ENCODE measurements at regions of chr1 and their contacts with region 1.

Region 1: GRCh38 chr1:17119076-17119772 is at the start of gene PADI2:
- DNase-seq: peak in 1 of 2 experiments; percentile 89
- H3K4me3 ChIP-seq: peak within 1 kb of the TSS; percentile 53 to 78 (median 67)
- H3K27ac ChIP-seq: no peak within 1 kb of the TSS
- H3K4me1 ChIP-seq: peaks cover 0 to 17% (median 5%) of the 10 kb centered on the region in 4 experiments; a peak in 5 of 7 replicates
- H3K27me3 ChIP-seq: peaks cover 16 to 29% (median 24%) of the 10 kb centered on the region in 4 experiments
- CTCF ChIP-seq: no peak
- EP300 ChIP-seq: no peak
- POLR2A ChIP-seq: no peak
- RAD21 ChIP-seq: no peak
- total RNA-seq, gene PADI2: 5.8 and 7.5 TPM in 2 replicates

Region 2: GRCh38 chr1:17222557-17222956 is 103.3 kb after region 1 on chr1:
- CTCF ChIA-PET with region 1: interaction called, 16 read pairs
- POLR2A ChIA-PET with region 1: no interaction called
- DNase-seq: no peak
- H3K4me3 ChIP-seq: no peak overlapping the region
- H3K27ac ChIP-seq: no peak overlapping the region
- H3K4me1 ChIP-seq: no peaks in the 10 kb centered on the region; a peak in 1 of 7 replicates
- H3K27me3 ChIP-seq: no peaks in the 10 kb centered on the region; a peak in 1 of 7 replicates
- CTCF ChIP-seq: no peak
- EP300 ChIP-seq: no peak
- POLR2A ChIP-seq: no peak
- RAD21 ChIP-seq: no peak

Region 3: DNA sequence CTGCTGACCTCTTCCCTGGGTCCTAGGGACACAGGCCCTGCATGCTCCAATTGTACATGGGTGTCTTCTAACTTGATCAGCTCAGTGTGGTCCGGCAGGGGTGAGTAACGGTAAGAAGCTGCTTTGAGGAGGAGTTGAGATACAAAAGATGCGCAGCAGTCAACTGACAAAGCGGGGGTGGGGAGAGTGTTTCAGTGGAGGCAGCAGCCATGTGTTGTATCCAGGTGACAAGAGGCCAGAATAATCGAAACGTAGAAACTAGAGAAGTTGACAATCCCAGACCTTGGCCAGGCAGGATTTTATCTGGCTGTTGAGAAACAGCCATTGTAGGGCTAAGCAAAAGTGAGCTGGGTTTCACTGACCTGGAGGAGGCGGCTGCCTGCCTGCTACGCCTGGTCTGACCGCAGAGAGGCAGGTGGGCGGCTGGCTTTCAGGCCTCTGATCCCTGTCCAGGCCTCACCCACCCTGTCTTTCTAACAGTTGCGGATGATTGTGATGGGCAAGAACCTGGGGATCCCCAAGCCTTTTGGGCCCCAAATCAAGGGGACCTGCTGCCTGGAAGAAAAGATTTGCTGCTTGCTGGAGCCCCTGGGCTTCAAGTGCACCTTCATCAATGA is 281.6 kb after region 1 on chr1:
- CTCF ChIA-PET with region 1: interaction called, 13 read pairs
- POLR2A ChIA-PET with region 1: interaction called, 3 read pairs
- DNase-seq: no peak
- H3K4me3 ChIP-seq: no peak overlapping the region
- H3K27ac ChIP-seq: no peak overlapping the region
- H3K4me1 ChIP-seq: peaks cover 0 to 10% (median 4%) of the 10 kb centered on the region in 4 experiments; a peak in 4 of 7 replicates
- H3K27me3 ChIP-seq: no peaks in the 10 kb centered on the region; a peak in 1 of 7 replicates
- CTCF ChIP-seq: peak in 1 of 3 experiments; percentile 22; a peak in 1 of 4 replicates
- EP300 ChIP-seq: no peak
- POLR2A ChIP-seq: no peak
- RAD21 ChIP-seq: peak in 1 of 2 experiments; percentile 12; a peak in 1 of 4 replicates

Measured in H1 (cell line).